GM12878 (cell line): ENCODE measurements at regions of chr13 and their contacts with region 1.

Region 1: GRCh38 chr13:39663958-39664357 is 8.5 kb downstream of the COG6 start:
- DNase-seq: no peak
- ATAC-seq: no peak
- H3K4me3 ChIP-seq: no peak overlapping the region
- H3K27ac ChIP-seq: no peak overlapping the region
- H3K4me1 ChIP-seq: no peaks in the 10 kb centered on the region
- H3K27me3 ChIP-seq: no peaks in the 10 kb centered on the region
- CTCF ChIP-seq: no peak
- EP300 ChIP-seq: no peak
- POLR2A ChIP-seq: no peak
- RAD21 ChIP-seq: no peak

Region 2: GRCh38 chr13:39676315-39676876 is 12.4 kb after region 1 on chr13:
- CTCF ChIA-PET with region 1: interaction called, 6 read pairs
- POLR2A ChIA-PET with region 1: no interaction called
- RAD21 ChIA-PET with region 1: interaction called, 3 read pairs
- SMC1A ChIA-PET with region 1: interaction called, 10 read pairs
- in situ Hi-C with region 1: no loop called
- intact Hi-C with region 1: no loop called
- DNase-seq: no peak
- ATAC-seq: peak; percentile 48; the same call in 2 of the 3 replicates
- H3K4me3 ChIP-seq: no peak overlapping the region
- H3K27ac ChIP-seq: no peak overlapping the region
- H3K4me1 ChIP-seq: no peaks in the 10 kb centered on the region
- H3K27me3 ChIP-seq: no peaks in the 10 kb centered on the region
- CTCF ChIP-seq: peak; percentile 21 to 50 (median 38); a peak in 4 of 6 replicates
- EP300 ChIP-seq: no peak
- POLR2A ChIP-seq: no peak
- RAD21 ChIP-seq: peak; percentile 35; the same call in 1 of the 2 replicates